Activated CD8-positive, alpha-beta T cell treated with anti-CD3 and anti-CD28 coated beads for 36 hours (primary cell): ENCODE measurements at regions of chr5 and their contacts with region 1.

Region 1: GRCh38 chr5:176447982-176448608 is at the start of gene FAF2:
- DNase-seq: peak; percentile 96
- ATAC-seq: peak; percentile 96
- H3K4me3 Mint-ChIP-seq: peak within 1 kb of the TSS; percentile 94
- H3K27ac Mint-ChIP-seq: peak within 1 kb of the TSS; percentile 99
- H3K4me1 Mint-ChIP-seq: peaks cover 31% of the 10 kb centered on the region
- H3K27me3 Mint-ChIP-seq: no peaks in the 10 kb centered on the region
- CTCF ChIP-seq: peak; percentile 93
- total RNA-seq, gene FAF2: 32.6 to 33.0 TPM

Region 2: GRCh38 chr5:176388444-176389134 is 59.5 kb before region 1 on chr5 and contains the starts of genes HIGD2A and NOP16:
- CTCF ChIA-PET with region 1: interaction called, 4 read pairs
- POLR2A ChIA-PET with region 1: no interaction called
- intact Hi-C with region 1: loop called (anchors 2 kb)
- DNase-seq: peak; percentile 100
- ATAC-seq: peak; percentile 92
- H3K4me3 Mint-ChIP-seq: peak within 1 kb of the TSS; percentile 98
- H3K27ac Mint-ChIP-seq: peak within 1 kb of the TSS; percentile 99
- H3K4me1 Mint-ChIP-seq: peaks cover 29% of the 10 kb centered on the region
- H3K27me3 Mint-ChIP-seq: no peaks in the 10 kb centered on the region
- CTCF ChIP-seq: no peak
- total RNA-seq, gene HIGD2A: 118 to 120 TPM
- total RNA-seq, gene NOP16: 71.8 to 75.1 TPM

Region 3: DNA sequence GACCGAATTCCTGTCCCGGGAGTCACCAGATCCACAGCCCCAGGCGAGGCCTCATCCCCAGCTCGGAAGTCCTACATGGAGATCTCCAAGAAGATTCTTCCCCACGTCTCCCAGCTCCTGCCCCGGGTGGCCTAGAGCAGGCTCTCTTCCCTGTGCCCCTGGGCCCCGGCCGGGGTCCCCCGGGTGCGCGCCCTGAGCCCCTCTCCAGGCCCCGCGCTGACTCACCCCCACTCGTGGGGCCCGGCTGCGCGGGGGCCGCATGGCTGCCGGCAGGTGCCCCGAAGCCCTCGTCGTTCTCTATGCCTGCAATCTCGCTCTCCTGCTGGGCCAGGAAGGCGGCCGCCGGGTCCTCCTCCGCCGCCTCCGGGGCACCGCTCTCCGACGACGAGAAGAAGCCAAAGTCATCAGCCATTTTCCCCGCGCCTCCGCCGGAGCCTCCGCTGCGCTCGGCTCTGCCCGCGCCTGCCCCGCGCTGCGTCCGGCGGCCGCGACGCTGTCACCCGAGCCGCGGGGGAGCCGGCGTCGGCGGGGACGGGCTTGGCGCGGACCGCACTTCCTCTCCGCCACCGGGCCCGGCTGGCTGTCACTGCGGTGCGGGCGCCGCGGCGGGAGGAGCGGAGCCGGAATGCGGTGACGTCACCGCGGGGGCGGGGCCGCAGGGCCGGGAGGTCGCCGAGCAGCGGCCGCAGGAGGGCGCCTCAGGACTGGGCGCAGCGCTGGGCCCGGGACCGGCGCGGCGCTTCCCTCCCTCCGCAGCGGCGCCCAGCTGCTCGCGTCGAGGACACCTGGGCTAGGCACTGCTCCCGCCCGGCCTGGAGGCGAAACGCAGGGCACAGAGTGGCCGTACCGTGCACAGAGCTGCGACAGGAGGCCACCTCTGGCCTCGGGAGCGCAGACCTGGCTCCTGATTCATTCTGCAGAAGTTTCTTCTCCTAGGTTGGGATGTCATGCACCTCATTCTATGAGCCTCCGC is 31.9 kb before region 1 on chr5 and contains the start of gene CLTB:
- CTCF ChIA-PET with region 1: interaction called, 21 read pairs
- POLR2A ChIA-PET with region 1: interaction called, 4 read pairs
- intact Hi-C with region 1: no loop called
- DNase-seq: peak; percentile 89
- ATAC-seq: peak; percentile 96
- H3K4me3 Mint-ChIP-seq: peak within 1 kb of the TSS; percentile 77
- H3K27ac Mint-ChIP-seq: peak within 1 kb of the TSS; percentile 72
- H3K4me1 Mint-ChIP-seq: peaks cover 40% of the 10 kb centered on the region
- H3K27me3 Mint-ChIP-seq: no peaks in the 10 kb centered on the region
- CTCF ChIP-seq: peak; percentile 71
- total RNA-seq, gene CLTB: 48.2 to 48.6 TPM

Region 4: DNA sequence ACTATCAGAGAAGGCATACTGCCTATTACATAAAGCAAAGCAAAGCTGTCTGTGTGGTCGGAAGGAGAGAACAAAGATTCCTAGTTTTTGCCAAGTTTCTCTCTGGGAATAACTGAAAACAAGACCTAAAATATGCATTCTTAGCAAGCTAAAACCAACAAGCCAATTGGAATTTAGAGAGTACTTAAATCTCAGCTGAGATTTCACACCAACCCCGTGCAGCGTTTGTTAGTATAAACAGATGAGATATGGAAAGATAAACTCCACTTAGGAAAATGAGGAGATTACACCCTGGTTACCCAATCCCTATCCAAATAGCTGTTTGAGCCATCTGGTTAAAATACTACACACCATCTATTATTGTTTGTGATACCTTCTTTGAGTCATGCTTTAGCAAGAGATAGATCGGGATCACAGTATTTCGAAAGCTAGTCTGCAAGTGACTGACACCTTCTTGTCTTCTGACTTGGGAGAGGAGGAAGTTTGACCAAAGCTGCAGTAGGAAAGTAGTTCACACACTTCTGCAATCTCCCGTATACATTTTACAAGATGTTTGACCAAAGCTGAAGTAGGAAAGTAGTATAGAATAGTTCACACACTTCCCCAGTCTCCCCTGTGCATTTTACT is 18.3 kb after region 1 on chr5:
- CTCF ChIA-PET with region 1: interaction called, 14 read pairs
- POLR2A ChIA-PET with region 1: interaction called, 5 read pairs
- intact Hi-C with region 1: no loop called
- DNase-seq: no peak
- ATAC-seq: no peak
- H3K4me3 Mint-ChIP-seq: no peak overlapping the region
- H3K27ac Mint-ChIP-seq: no peak overlapping the region
- H3K4me1 Mint-ChIP-seq: peaks cover 9% of the 10 kb centered on the region
- H3K27me3 Mint-ChIP-seq: no peaks in the 10 kb centered on the region
- CTCF ChIP-seq: no peak

Region 5: GRCh38 chr5:176530983-176531821 is 83.1 kb after region 1 on chr5:
- CTCF ChIA-PET with region 1: interaction called, 12 read pairs
- POLR2A ChIA-PET with region 1: interaction called, 13 read pairs
- intact Hi-C with region 1: no loop called
- DNase-seq: peak; percentile 65
- ATAC-seq: peak; percentile 32
- H3K4me3 Mint-ChIP-seq: peak overlapping the region; percentile 70
- H3K27ac Mint-ChIP-seq: peak overlapping the region; percentile 85
- H3K4me1 Mint-ChIP-seq: peaks cover 57% of the 10 kb centered on the region
- H3K27me3 Mint-ChIP-seq: no peaks in the 10 kb centered on the region
- CTCF ChIP-seq: no peak

Region 6: GRCh38 chr5:176537608-176538504 is 89.8 kb after region 1 on chr5:
- CTCF ChIA-PET with region 1: interaction called, 12 read pairs
- POLR2A ChIA-PET with region 1: interaction called, 13 read pairs
- intact Hi-C with region 1: loop called (anchors 1 kb)
- DNase-seq: peak; percentile 99
- ATAC-seq: peak; percentile 70
- H3K4me3 Mint-ChIP-seq: peak overlapping the region; percentile 86
- H3K27ac Mint-ChIP-seq: peak overlapping the region; percentile 98
- H3K4me1 Mint-ChIP-seq: peaks cover 68% of the 10 kb centered on the region
- H3K27me3 Mint-ChIP-seq: no peaks in the 10 kb centered on the region
- CTCF ChIP-seq: no peak

Region 7: GRCh38 chr5:176543428-176544173 is 95.5 kb after region 1 on chr5:
- CTCF ChIA-PET with region 1: interaction called, 12 read pairs
- POLR2A ChIA-PET with region 1: interaction called, 4 read pairs
- intact Hi-C with region 1: no loop called
- DNase-seq: peak; percentile 81
- ATAC-seq: peak; percentile 66
- H3K4me3 Mint-ChIP-seq: peak overlapping the region; percentile 94
- H3K27ac Mint-ChIP-seq: peak overlapping the region; percentile 94
- H3K4me1 Mint-ChIP-seq: peaks cover 66% of the 10 kb centered on the region
- H3K27me3 Mint-ChIP-seq: no peaks in the 10 kb centered on the region
- CTCF ChIP-seq: peak; percentile 5

Region 8: GRCh38 chr5:176624916-176625315 is 176.8 kb after region 1 on chr5:
- CTCF ChIA-PET with region 1: no interaction called
- POLR2A ChIA-PET with region 1: no interaction called
- intact Hi-C with region 1: no loop called
- DNase-seq: no peak
- ATAC-seq: no peak
- H3K4me3 Mint-ChIP-seq: no peak overlapping the region
- H3K27ac Mint-ChIP-seq: no peak overlapping the region
- H3K4me1 Mint-ChIP-seq: peaks cover 15% of the 10 kb centered on the region
- H3K27me3 Mint-ChIP-seq: peaks cover 52% of the 10 kb centered on the region
- CTCF ChIP-seq: no peak